GM12878 (cell line): ENCODE measurements at regions of chr1 and their contacts with region 1.

Region 1: GRCh38 chr1:170414989-170415709 is 116.8 kb upstream of the GORAB start:
- DNase-seq: no peak
- ATAC-seq: no peak
- H3K4me3 ChIP-seq: no peak overlapping the region
- H3K27ac ChIP-seq: no peak overlapping the region
- H3K4me1 ChIP-seq: no peaks in the 10 kb centered on the region
- H3K27me3 ChIP-seq: no peaks in the 10 kb centered on the region
- CTCF ChIP-seq: no peak
- EP300 ChIP-seq: no peak
- POLR2A ChIP-seq: no peak
- RAD21 ChIP-seq: no peak

Region 2: GRCh38 chr1:170426596-170426995 is 11.4 kb after region 1 on chr1:
- CTCF ChIA-PET with region 1: interaction called, 3 read pairs
- POLR2A ChIA-PET with region 1: no interaction called
- RAD21 ChIA-PET with region 1: no interaction called
- SMC1A ChIA-PET with region 1: interaction called, 12 read pairs
- in situ Hi-C with region 1: no loop called
- intact Hi-C with region 1: no loop called
- DNase-seq: no peak
- ATAC-seq: no peak
- H3K4me3 ChIP-seq: no peak overlapping the region
- H3K27ac ChIP-seq: no peak overlapping the region
- H3K4me1 ChIP-seq: no peaks in the 10 kb centered on the region
- H3K27me3 ChIP-seq: 0 out of 4 replicates have a peak, but pooled peaks cover 0 to 3% of the 10 kb centered on the region in 2 experiments
- CTCF ChIP-seq: no peak
- EP300 ChIP-seq: no peak
- POLR2A ChIP-seq: no peak
- RAD21 ChIP-seq: no peak